Activated CD8-positive, alpha-beta T cell treated with anti-CD3 and anti-CD28 coated beads, Interleukin-2, amount 10 ng/mL, durations not matched to agents 7 days and 5 days (primary cell): ENCODE measurements at regions of chr20 and their contacts with region 1.

Region 1: GRCh38 chr20:33666293-33667244 is at the start of gene ACTL10:
- DNase-seq: peak; percentile 90
- ATAC-seq: peak; percentile 55
- H3K4me3 Mint-ChIP-seq: peak within 1 kb of the TSS; percentile 90
- H3K27ac Mint-ChIP-seq: peak within 1 kb of the TSS; percentile 95
- H3K4me1 Mint-ChIP-seq: peaks cover 47% of the 10 kb centered on the region
- H3K27me3 Mint-ChIP-seq: no peaks in the 10 kb centered on the region
- total RNA-seq, gene ACTL10: 2.9 to 3.2 TPM

Region 2: DNA sequence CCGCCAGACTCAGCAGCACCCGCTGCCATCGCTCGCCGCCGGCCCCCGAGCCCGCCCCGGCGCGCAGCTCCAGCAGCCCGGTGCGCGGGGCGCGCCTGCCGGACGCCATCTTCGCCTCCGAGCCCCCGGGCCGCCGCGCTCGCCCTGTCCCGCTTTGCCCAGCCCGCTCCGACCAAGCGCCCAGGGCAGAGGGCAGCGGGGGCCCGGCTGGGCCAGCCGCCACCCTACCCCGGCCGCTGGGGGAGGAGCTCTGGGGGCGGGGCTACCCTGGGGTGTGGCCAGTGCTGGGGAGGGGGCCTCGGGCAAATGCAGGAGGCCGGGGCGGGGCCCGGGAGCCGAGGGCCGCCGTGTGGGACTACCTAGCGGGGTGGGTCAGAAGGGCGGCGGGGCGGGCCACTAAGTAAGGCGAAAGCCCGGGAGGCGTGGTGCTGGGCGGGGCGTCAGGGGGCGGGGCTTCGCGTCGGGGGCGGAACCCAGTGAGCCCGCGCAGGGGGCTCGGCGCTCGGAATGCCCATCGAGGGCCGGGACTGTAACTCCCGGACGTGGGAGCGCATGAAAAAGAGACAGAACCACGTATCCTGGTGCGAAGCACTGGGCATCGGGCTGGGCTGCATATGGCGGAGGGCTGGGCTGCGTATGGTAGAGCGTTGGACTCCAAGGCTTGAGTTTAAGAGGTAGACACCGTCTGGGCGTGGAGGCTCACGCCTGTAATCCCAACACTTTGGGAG is 222.9 kb before region 1 on chr20 and contains the start of gene SNTA1:
- CTCF ChIA-PET with region 1: interaction called, 12 read pairs
- POLR2A ChIA-PET with region 1: interaction called, 3 read pairs
- DNase-seq: peak; percentile 94
- ATAC-seq: peak; percentile 88
- H3K4me3 Mint-ChIP-seq: peak within 1 kb of the TSS; percentile 85
- H3K27ac Mint-ChIP-seq: peak within 1 kb of the TSS; percentile 95
- H3K4me1 Mint-ChIP-seq: peaks cover 34% of the 10 kb centered on the region
- H3K27me3 Mint-ChIP-seq: peaks cover 11% of the 10 kb centered on the region
- total RNA-seq, gene SNTA1: 13.1 to 13.4 TPM

Region 3: DNA sequence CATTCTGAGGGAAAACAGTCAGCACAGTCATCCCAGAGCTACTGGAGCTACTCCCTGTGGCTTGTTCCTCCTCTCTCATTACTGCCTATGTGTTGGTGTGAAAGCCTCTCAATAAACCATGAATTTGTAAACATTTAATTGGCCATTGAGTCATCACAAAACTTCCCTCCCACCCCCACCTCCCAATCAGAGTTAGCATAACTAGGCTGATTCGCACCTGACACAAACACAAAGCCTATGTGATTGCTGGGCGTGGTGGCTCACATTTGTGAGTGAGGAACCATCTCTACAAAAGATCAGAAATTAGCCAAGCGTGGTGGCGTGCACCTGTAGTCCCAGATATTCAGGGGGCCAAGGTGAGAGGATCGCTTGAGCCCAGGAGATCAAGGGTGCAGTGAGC is 205.9 kb before region 1 on chr20:
- CTCF ChIA-PET with region 1: interaction called, 16 read pairs
- POLR2A ChIA-PET with region 1: no interaction called
- DNase-seq: no peak
- ATAC-seq: no peak
- H3K4me3 Mint-ChIP-seq: no peak overlapping the region
- H3K27ac Mint-ChIP-seq: no peak overlapping the region
- H3K4me1 Mint-ChIP-seq: no peaks in the 10 kb centered on the region
- H3K27me3 Mint-ChIP-seq: no peaks in the 10 kb centered on the region

Region 4: DNA sequence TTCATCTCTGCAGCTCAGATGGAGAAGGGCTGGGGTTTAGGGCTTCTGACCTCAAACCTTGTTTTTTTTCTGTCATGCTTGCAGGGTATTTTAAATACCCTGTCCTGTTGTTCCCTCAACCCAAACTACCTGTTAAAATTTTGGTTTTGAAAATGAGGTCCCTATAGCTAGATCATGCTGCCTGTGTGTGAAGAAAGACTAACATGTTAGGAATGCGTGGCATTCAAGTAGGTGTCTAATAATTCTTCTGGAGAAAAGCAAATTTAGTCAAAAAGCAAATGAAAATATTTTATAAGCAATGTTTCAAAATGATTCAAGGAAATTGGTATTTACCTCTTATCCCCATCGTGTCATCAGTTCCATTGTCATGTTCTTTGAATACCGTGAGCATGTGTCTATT is 81.6 kb before region 1 on chr20:
- CTCF ChIA-PET with region 1: no interaction called
- POLR2A ChIA-PET with region 1: no interaction called
- DNase-seq: no peak
- ATAC-seq: no peak
- H3K4me3 Mint-ChIP-seq: no peak overlapping the region
- H3K27ac Mint-ChIP-seq: no peak overlapping the region
- H3K4me1 Mint-ChIP-seq: no peaks in the 10 kb centered on the region
- H3K27me3 Mint-ChIP-seq: no peaks in the 10 kb centered on the region

Region 5: GRCh38 chr20:33653218-33653899 is 13.2 kb before region 1 on chr20:
- CTCF ChIA-PET with region 1: interaction called, 25 read pairs
- POLR2A ChIA-PET with region 1: interaction called, 4 read pairs
- DNase-seq: peak; percentile 58
- ATAC-seq: peak; percentile 63
- H3K4me3 Mint-ChIP-seq: no peak overlapping the region
- H3K27ac Mint-ChIP-seq: peak overlapping the region; percentile 1
- H3K4me1 Mint-ChIP-seq: peaks cover 4% of the 10 kb centered on the region
- H3K27me3 Mint-ChIP-seq: no peaks in the 10 kb centered on the region

Region 6: DNA sequence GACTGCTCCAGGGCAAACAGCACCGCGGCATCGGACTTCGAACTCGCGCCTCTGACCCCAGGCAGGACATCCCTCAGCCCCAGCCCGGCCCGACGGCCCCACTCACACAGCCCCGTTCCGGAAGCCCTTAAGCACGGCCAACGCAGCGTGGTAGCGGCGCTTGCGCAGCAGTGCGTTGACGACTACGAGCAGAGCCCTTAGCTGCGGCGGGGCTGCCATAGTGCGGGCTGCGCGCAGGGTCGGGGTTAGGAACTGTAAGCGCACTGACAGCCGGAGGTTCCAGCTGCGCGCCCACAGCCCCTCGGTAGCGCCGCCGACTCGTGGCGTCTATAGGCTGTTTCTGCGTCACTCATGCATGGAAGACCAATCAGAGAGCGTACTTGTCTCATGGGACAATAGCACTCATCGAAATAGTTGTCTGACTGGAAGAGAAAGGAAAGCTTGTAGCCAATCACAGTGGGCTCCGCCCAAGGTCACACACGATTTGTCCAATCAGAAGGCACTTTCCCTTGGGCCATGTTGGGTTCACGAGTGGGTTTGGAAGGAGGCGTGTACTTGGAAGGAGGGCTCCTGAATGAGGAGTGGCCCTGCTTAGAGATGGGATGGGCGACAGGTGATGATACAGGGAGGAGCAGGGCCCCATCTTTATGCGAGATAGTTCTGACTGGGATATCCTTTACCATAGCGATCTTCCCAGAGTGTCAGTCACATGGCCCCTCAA is 53.6 kb after region 1 on chr20 and contains the start of gene PXMP4:
- CTCF ChIA-PET with region 1: interaction called, 12 read pairs
- POLR2A ChIA-PET with region 1: interaction called, 12 read pairs
- DNase-seq: peak; percentile 93
- ATAC-seq: peak; percentile 99
- H3K4me3 Mint-ChIP-seq: peak within 1 kb of the TSS; percentile 91
- H3K27ac Mint-ChIP-seq: peak within 1 kb of the TSS; percentile 81
- H3K4me1 Mint-ChIP-seq: peaks cover 27% of the 10 kb centered on the region
- H3K27me3 Mint-ChIP-seq: no peaks in the 10 kb centered on the region
- total RNA-seq, gene PXMP4: 17.1 to 17.7 TPM